ENCODE measurements at regions of chr1 and their contacts with region 1.

Region 1: GRCh38 chr1:117367047-117368018 is at the start of gene MAN1A2:
- DNase-seq: peak; percentile 66 to 84 (median 69)
- H3K4me3 ChIP-seq: peak within 1 kb of the TSS; percentile 72 to 92
- H3K4me3 Mint-ChIP-seq: peak within 1 kb of the TSS; percentile 93 to 97 (median 96)
- H3K27ac ChIP-seq: peak within 1 kb of the TSS; percentile 70
- H3K27ac Mint-ChIP-seq: peak within 1 kb of the TSS; percentile 96 to 99 (median 97)
- H3K4me1 ChIP-seq: peaks cover 74% of the 10 kb centered on the region
- H3K4me1 Mint-ChIP-seq: peaks cover 53 to 84% (median 63%) of the 10 kb centered on the region in 4 donors
- H3K27me3 ChIP-seq: no peaks in the 10 kb centered on the region
- H3K27me3 Mint-ChIP-seq: no peaks in the 10 kb centered on the region
- total RNA-seq, gene MAN1A2: 57.0 to 66.5 TPM

Region 2: GRCh38 chr1:117121776-117122697 is 245.3 kb before region 1 on chr1:
- CTCF ChIA-PET with region 1: no interaction called
- POLR2A ChIA-PET with region 1: no interaction called
- intact Hi-C with region 1: loop called (anchors 5 kb)
- DNase-seq: peak; percentile 79 to 83 (median 82)
- H3K4me3 ChIP-seq: peak overlapping the region; percentile 85 to 98
- H3K4me3 Mint-ChIP-seq: peak overlapping the region; percentile 87 to 92 (median 88)
- H3K27ac ChIP-seq: peak overlapping the region; percentile 53
- H3K27ac Mint-ChIP-seq: peak overlapping the region; percentile 7 to 87 (median 70)
- H3K4me1 ChIP-seq: peaks cover 15% of the 10 kb centered on the region
- H3K4me1 Mint-ChIP-seq: peaks cover 4 to 10% (median 8%) of the 10 kb centered on the region in 4 donors
- H3K27me3 ChIP-seq: no peaks in the 10 kb centered on the region
- H3K27me3 Mint-ChIP-seq: peaks cover 4 to 5% of the 10 kb centered on the region in 2 donors

Region 3: GRCh38 chr1:117339866-117340700 is 27.2 kb before region 1 on chr1:
- CTCF ChIA-PET with region 1: interaction called, 6 read pairs
- POLR2A ChIA-PET with region 1: interaction called, 15 read pairs
- intact Hi-C with region 1: no loop called
- DNase-seq: peak; percentile 28 to 47 (median 42)
- H3K4me3 ChIP-seq: no peak overlapping the region
- H3K4me3 Mint-ChIP-seq: no peak overlapping the region
- H3K27ac ChIP-seq: no peak overlapping the region
- H3K27ac Mint-ChIP-seq: peak overlapping the region in 4 of 7 donors; percentile 3 to 24 (median 8)
- H3K4me1 ChIP-seq: peaks cover 16% of the 10 kb centered on the region
- H3K4me1 Mint-ChIP-seq: peaks cover 9 to 23% (median 15%) of the 10 kb centered on the region in 4 donors
- H3K27me3 ChIP-seq: no peaks in the 10 kb centered on the region
- H3K27me3 Mint-ChIP-seq: peaks cover 0 to under 1% of the 10 kb centered on the region in 2 donors

Region 4: DNA sequence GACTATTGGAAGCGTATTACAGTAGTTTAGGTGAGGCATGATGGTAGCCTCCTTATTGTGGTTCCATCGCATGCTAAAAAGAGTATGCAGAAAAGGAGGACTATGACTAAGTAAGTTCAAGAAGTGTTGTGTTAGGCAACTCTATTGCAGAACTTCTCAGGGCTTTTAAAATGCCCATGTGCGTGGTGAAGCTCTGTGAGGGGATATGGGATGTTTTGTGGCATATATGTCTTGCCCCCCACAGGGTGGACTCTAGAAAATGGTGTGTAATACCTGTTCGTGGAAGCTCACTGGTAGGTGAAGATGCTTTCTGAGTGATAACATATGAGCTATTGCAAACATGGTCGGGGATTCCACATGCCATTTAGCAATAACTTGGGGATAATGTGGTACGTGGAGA is 31.6 kb after region 1 on chr1:
- CTCF ChIA-PET with region 1: no interaction called
- POLR2A ChIA-PET with region 1: interaction called, 7 read pairs
- intact Hi-C with region 1: loop called (anchors 5 kb)
- DNase-seq: no peak
- H3K4me3 ChIP-seq: no peak overlapping the region
- H3K4me3 Mint-ChIP-seq: peak overlapping the region in 2 of 8 donors; percentile 0 to 23
- H3K27ac ChIP-seq: no peak overlapping the region
- H3K27ac Mint-ChIP-seq: no peak overlapping the region
- H3K4me1 ChIP-seq: peaks cover 26% of the 10 kb centered on the region
- H3K4me1 Mint-ChIP-seq: peaks cover 41 to 73% (median 59%) of the 10 kb centered on the region in 4 donors
- H3K27me3 ChIP-seq: no peaks in the 10 kb centered on the region
- H3K27me3 Mint-ChIP-seq: no peaks in the 10 kb centered on the region

Region 5: DNA sequence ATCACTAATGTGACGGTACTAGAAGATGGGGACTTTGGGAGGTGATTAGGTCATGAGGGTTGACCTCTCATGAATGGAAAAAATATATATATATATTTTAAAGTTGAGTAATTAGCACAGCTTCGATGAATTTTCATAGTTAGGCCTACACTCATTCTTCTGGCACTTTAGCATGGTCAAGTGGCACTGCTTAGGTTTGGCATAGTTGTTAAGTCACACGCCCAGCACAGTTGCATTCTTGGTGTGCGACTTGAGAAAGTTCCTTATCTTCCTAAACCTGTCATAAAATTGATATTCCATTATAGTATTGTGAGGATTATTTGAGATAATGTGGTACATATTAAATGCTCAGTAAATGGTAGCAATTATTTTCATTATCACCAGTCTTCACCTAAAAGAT is 47.6 kb after region 1 on chr1:
- CTCF ChIA-PET with region 1: no interaction called
- POLR2A ChIA-PET with region 1: no interaction called
- intact Hi-C with region 1: no loop called
- DNase-seq: no peak
- H3K4me3 ChIP-seq: no peak overlapping the region
- H3K4me3 Mint-ChIP-seq: no peak overlapping the region
- H3K27ac ChIP-seq: no peak overlapping the region
- H3K27ac Mint-ChIP-seq: no peak overlapping the region
- H3K4me1 ChIP-seq: peaks cover 10% of the 10 kb centered on the region
- H3K4me1 Mint-ChIP-seq: peaks cover 19 to 39% (median 26%) of the 10 kb centered on the region in 4 donors
- H3K27me3 ChIP-seq: no peaks in the 10 kb centered on the region
- H3K27me3 Mint-ChIP-seq: no peaks in the 10 kb centered on the region

Region 6: GRCh38 chr1:117453958-117454357 is 86.6 kb after region 1 on chr1:
- CTCF ChIA-PET with region 1: no interaction called
- POLR2A ChIA-PET with region 1: no interaction called
- intact Hi-C with region 1: loop called (anchors 10 kb)
- DNase-seq: no peak
- H3K4me3 ChIP-seq: no peak overlapping the region
- H3K4me3 Mint-ChIP-seq: no peak overlapping the region
- H3K27ac ChIP-seq: no peak overlapping the region
- H3K27ac Mint-ChIP-seq: no peak overlapping the region
- H3K4me1 ChIP-seq: no peaks in the 10 kb centered on the region
- H3K4me1 Mint-ChIP-seq: peaks cover 0 to 4% (median under 1%) of the 10 kb centered on the region in 4 donors
- H3K27me3 ChIP-seq: no peaks in the 10 kb centered on the region
- H3K27me3 Mint-ChIP-seq: no peaks in the 10 kb centered on the region

Region 7: DNA sequence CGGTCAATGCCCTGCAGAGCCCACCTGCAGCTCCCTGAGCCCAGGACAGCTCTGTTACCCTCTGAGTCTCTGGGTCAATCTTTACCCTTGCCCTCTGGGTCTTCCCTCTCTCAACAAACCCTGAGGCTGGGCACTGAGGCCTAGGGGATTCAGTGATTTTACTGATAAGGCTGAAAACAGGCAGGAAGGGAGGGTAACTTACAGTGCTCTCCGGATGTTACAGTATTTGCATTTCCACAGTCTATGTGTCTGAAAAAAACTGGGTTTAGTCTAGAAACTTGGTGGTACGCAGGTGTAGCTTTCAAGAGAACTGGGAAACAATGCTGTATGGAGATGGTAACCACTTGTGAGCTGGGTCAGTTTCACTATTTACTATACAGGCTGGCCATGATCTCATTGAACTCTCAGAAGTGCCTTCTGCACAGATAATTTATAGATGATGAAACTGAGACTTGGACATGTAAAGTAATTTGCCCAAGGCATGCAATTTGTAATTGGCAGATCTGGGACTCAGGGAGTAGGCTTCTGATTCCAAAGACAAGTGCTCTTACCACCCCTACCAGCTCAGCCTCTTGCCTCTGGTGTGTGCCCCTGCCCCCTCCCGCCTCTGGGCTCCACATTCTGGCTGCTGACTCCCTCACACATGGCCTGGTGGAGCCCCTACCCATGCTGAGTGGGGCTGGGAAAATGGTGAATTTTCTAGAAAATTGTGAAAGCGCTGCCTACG is 287.3 kb after region 1 on chr1:
- CTCF ChIA-PET with region 1: no interaction called
- POLR2A ChIA-PET with region 1: interaction called, 13 read pairs
- intact Hi-C with region 1: no loop called
- DNase-seq: peak in 4 of 5 donors; percentile 31 to 44 (median 37)
- H3K4me3 ChIP-seq: peak overlapping the region; percentile 8 to 20
- H3K4me3 Mint-ChIP-seq: peak overlapping the region; percentile 52 to 88 (median 76)
- H3K27ac ChIP-seq: peak overlapping the region; percentile 9
- H3K27ac Mint-ChIP-seq: peak overlapping the region; percentile 81 to 99 (median 94)
- H3K4me1 ChIP-seq: peaks cover 95% of the 10 kb centered on the region
- H3K4me1 Mint-ChIP-seq: peaks cover 75 to 92% (median 86%) of the 10 kb centered on the region in 4 donors
- H3K27me3 ChIP-seq: no peaks in the 10 kb centered on the region
- H3K27me3 Mint-ChIP-seq: no peaks in the 10 kb centered on the region

Region 8: DNA sequence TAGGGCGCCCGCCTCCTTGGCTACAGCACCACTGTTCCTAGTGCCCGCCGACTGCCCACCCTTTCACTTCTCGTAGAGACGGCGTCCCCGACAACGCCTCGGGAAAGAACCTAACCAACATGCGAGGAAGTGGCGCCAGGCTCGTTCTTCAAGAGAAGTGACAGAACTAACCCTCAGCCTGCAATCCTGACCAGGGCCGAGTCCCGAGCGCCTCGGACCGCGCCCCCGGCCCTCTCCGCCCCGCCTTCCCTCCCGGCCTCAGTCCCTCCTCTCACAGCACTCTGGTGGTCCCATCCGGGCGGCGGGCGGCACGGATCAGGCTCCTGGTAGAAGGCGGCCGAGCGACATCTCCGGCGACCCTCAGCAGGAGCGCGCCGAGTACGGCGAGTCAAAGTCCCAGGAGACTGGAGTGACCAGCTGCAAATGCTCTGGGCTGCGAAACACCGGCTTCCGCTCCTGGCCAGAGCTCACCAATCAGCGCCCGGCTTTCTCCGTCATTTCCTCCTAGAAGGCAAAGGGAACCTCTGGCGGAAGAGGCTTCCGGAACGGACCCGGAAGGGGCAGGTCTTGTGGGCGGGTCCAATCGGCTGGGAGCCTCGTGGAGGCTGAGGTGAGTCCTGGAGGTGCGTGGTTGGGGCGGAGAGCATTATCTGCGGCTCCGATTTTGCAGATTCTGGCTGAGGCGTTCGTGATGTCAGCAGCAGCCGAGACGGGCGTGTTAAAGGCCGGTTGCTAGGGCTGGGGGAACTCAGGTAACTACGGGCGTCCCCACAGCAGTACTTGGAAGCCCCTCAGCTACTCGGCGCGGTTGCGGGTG is 562.0 kb after region 1 on chr1 and contains the starts of genes GDAP2 and WDR3:
- CTCF ChIA-PET with region 1: no interaction called
- POLR2A ChIA-PET with region 1: interaction called, 3 read pairs
- intact Hi-C with region 1: loop called (anchors 1 kb)
- DNase-seq: peak; percentile 94 to 99 (median 97)
- H3K4me3 ChIP-seq: peak within 1 kb of the TSS; percentile 66 to 81
- H3K4me3 Mint-ChIP-seq: peak within 1 kb of the TSS; percentile 94 to 97 (median 96)
- H3K27ac ChIP-seq: peak within 1 kb of the TSS; percentile 89
- H3K27ac Mint-ChIP-seq: peak within 1 kb of the TSS; percentile 93 to 99 (median 97)
- H3K4me1 ChIP-seq: peaks cover 41% of the 10 kb centered on the region
- H3K4me1 Mint-ChIP-seq: peaks cover 39 to 63% (median 51%) of the 10 kb centered on the region in 4 donors
- H3K27me3 ChIP-seq: no peaks in the 10 kb centered on the region
- H3K27me3 Mint-ChIP-seq: no peaks in the 10 kb centered on the region
- total RNA-seq, gene GDAP2: 28.1 to 29.5 TPM
- total RNA-seq, gene WDR3: 26.5 to 29.3 TPM

Measured in CD4-positive, alpha-beta memory T cell (primary cell).